ENCODE measurements at regions of chr19 and their contacts with region 1.

Region 1: DNA sequence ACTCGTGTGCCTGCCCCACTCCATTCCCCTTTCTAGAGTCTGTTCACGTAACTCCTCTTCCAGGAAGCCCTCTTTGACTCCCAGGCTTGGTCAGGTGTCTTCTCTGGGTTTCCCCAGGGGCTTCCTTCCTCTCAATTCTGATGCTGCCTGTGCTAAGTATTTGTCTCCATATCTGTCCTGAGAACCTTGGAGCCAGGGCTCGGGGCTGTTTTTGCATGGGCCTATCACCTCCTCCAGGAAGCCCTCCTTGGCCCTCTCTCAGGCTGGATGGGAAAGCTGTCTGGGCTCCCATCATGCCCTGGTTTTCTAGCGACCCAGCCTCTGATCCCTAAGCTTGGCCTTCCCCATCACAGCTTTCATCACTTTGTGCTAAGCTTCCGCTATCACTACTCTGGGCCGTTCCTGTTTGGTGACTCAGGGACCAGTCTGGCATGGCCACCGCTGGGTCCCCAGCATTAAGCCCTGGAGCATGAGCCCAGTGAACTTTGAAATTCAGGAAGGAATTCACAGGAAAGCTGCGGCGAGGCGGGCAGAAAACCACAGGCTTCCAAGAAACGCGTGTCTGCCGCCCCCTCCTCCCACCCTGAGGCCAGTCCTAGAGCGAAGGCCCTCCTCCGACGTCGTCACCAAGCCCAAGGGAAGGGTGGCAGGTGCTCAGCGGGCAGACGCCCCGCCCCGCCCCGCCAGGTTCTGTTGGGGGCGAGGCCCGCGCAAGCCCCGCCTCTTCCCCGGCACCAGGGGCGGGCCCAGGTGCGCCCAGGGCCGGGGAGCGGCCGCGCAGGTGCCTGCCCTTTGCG is 486 bp upstream of the SPINT2 start:
- DNase-seq: peak in 6 of 10 donors; percentile 48 to 95 (median 78)

Region 2: GRCh38 chr19:38321646-38322196 is 57.8 kb after region 1 on chr19:
- intact Hi-C with region 1: loop called (anchors 2 kb)
- DNase-seq: peak in 1 of 10 donors; percentile 18

Region 3: GRCh38 chr19:38361633-38362075 is 97.8 kb after region 1 on chr19:
- intact Hi-C with region 1: no loop called
- DNase-seq: peak; percentile 35 to 94 (median 58)

Region 4: DNA sequence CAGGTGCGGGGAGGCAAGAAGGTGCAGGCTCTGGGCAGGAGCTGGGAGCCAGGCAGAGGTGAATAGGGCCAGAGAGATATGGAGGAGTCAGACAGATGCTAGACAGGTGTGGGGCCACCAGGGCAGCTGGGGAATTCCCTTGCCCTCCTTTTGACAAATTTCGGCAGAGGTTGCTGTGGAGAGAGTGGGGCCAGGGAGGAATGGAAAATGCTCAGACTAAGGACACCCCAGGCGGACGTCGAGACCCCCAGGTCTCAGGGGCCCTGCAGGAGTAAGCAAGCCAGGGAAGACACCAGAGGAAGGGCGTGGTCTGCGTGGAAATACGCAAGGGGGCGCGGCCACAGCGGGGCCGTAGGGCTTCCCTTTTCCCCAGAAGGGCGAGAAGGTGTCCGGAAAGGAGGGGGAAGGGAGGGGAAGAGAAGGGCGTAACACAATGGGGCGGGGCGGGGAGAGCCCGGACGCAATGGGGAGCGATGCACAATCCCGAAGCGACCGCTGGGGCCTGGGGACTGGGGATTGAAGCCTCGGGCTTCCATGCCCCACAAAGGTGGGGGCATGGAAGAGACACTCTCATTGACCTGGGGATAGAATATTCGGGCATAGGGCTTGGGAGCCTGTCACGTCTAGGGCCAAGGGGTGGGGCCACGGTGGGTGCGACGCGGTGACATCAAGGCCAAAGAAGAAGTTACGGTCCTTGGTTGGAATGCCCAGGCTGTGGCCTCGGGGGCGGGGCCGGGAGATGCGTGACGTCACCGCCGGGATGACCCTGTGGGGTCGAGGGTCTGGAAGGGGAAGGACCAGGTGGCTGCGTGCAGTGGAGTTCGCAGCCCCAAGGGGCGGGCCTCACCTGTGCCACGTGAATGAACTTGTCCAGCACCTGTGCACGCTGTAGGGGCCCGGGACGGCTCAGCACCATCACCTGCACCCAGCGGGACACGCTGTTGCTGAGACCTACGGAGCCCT is 153.9 kb after region 1 on chr19:
- intact Hi-C with region 1: no loop called
- DNase-seq: peak in 2 of 10 donors; percentile 12 to 22